Uterus (tissue), 4 donors: ENCODE measurements at regions of chr2 and their contacts with region 1.

Region 1: DNA sequence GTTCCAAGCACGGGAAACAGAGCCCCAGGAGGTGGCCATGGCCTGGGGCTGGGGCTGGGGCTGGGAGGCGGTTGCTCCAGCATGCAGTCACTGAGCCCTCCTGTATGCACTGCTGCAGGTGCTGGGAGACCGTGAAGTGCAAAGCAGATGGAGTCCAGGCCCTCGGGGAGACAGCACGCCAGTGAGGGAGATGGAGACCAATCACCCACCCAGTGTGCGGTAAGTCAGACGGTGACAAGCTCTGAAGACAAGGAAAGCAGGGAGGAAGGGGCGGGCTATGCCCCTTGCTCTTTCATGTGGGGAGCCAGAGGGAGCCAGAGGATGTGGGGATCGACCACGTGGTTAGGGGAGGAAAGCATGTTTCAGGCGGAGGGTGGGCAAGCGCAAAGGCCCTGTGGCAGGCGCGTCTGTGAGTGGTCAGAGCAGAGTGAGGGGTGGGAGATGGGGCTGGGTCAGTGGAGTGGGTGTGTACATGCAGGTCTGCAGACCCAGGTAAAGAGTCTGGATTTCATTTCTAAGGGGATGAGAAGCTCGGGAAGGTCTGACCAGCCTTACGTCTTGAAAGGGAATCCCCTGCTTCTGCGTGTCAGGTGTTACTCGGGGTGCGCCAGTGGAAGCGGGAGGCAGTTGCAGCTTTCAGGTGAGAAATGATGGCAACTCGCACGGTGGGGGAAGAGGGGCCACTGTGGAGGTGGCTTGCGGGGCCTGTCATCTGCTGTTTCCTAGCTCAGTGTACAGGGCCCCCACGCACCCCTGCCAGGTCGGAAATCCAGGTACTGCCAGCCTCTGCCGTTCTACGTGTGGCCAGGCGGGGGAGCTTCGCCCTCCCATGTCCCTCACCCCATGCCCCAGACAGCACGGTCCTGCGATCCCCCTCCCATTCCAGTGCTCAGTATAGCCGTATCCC is 19.4 kb downstream of the RRM2 start:
- DNase-seq: peak in 1 of 2 donors; percentile 45
- H3K4me3 ChIP-seq: no peak overlapping the region
- H3K27ac ChIP-seq: no peak overlapping the region
- H3K4me1 ChIP-seq: no peaks in the 10 kb centered on the region
- H3K27me3 ChIP-seq: no peaks in the 10 kb centered on the region
- CTCF ChIP-seq: peak; percentile 42 to 69 (median 62)
- POLR2A ChIP-seq: no peak

Region 2: GRCh38 chr2:10239561-10239967 is 97.6 kb after region 1 on chr2:
- intact Hi-C with region 1: no loop called
- DNase-seq: peak; percentile 40 to 50
- H3K4me3 ChIP-seq: no peak overlapping the region
- H3K27ac ChIP-seq: no peak overlapping the region
- H3K4me1 ChIP-seq: no peaks in the 10 kb centered on the region
- H3K27me3 ChIP-seq: no peaks in the 10 kb centered on the region
- CTCF ChIP-seq: peak in 2 of 4 experiments; percentile 2 to 25
- POLR2A ChIP-seq: no peak

Region 3: DNA sequence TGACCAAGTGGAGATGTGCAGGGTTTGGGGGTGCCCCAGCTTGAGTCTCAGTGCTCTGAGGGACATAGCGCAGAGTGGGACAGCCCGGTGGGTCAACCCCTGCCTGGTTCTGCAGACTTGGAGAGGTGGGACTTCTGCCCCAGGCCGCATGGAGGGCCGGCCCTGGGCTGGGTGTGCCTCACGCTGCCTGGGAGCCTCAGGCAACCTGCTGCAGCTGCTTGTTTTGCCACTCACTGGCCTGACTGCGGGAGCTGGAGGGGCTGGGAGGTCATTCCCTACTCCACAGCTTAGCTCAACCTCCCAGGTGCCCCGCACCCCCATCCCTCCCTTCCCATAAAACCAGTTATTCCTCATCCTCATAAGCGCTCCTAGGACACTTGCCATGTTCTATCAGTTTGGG is 273.1 kb after region 1 on chr2:
- intact Hi-C with region 1: loop called (anchors 5 kb)
- DNase-seq: no peak
- H3K4me3 ChIP-seq: no peak overlapping the region
- H3K27ac ChIP-seq: no peak overlapping the region
- H3K4me1 ChIP-seq: no peaks in the 10 kb centered on the region
- H3K27me3 ChIP-seq: no peaks in the 10 kb centered on the region
- CTCF ChIP-seq: no peak
- POLR2A ChIP-seq: no peak

Region 4: GRCh38 chr2:10434886-10435819 is 293.2 kb after region 1 on chr2:
- intact Hi-C with region 1: loop called (anchors 5 kb)
- DNase-seq: peak; percentile 72 to 80
- H3K4me3 ChIP-seq: no peak overlapping the region
- H3K27ac ChIP-seq: no peak overlapping the region
- H3K4me1 ChIP-seq: no peaks in the 10 kb centered on the region
- H3K27me3 ChIP-seq: no peaks in the 10 kb centered on the region
- CTCF ChIP-seq: peak; percentile 96 to 99 (median 98)
- POLR2A ChIP-seq: no peak